Activated CD8-positive, alpha-beta T cell treated with anti-CD3 and anti-CD28 coated beads for 36 hours (primary cell): ENCODE measurements at regions of chr4 and their contacts with region 1.

Region 1: GRCh38 chr4:125314676-125315575 is at the start of gene FAT4:
- DNase-seq: peak; percentile 54
- ATAC-seq: peak; percentile 85
- H3K4me3 Mint-ChIP-seq: peak within 1 kb of the TSS; percentile 71
- H3K27ac Mint-ChIP-seq: no peak within 1 kb of the TSS
- H3K4me1 Mint-ChIP-seq: peaks cover 33% of the 10 kb centered on the region
- H3K27me3 Mint-ChIP-seq: peaks cover 65% of the 10 kb centered on the region
- CTCF ChIP-seq: no peak
- total RNA-seq, gene FAT4: not detected

Region 2: DNA sequence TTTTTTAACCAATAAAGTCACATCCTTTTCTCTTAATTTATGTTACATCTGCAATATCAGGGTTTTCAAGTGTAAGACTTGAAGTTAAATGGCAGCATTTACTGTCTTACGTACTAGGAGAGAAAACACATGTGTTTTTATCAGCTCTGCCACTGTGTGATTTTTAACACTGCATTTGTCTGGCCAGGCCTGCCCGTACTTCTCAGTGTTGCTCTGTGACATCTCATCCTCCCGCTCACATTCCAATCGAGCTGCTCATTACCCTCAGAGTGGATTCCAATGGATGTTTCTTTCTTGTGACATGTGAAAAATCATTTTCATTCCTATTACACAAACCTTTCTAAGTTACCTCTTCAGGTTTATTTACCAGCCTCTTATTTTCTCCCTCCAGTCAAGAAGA is 420.2 kb after region 1 on chr4:
- CTCF ChIA-PET with region 1: interaction called, 3 read pairs
- POLR2A ChIA-PET with region 1: no interaction called
- intact Hi-C with region 1: loop called (anchors 10 kb)
- DNase-seq: no peak
- ATAC-seq: no peak
- H3K4me3 Mint-ChIP-seq: no peak overlapping the region
- H3K27ac Mint-ChIP-seq: no peak overlapping the region
- H3K4me1 Mint-ChIP-seq: no peaks in the 10 kb centered on the region
- H3K27me3 Mint-ChIP-seq: no peaks in the 10 kb centered on the region
- CTCF ChIP-seq: no peak